ENCODE measurements at regions of chr10 and their contacts with region 1.

Region 1: DNA sequence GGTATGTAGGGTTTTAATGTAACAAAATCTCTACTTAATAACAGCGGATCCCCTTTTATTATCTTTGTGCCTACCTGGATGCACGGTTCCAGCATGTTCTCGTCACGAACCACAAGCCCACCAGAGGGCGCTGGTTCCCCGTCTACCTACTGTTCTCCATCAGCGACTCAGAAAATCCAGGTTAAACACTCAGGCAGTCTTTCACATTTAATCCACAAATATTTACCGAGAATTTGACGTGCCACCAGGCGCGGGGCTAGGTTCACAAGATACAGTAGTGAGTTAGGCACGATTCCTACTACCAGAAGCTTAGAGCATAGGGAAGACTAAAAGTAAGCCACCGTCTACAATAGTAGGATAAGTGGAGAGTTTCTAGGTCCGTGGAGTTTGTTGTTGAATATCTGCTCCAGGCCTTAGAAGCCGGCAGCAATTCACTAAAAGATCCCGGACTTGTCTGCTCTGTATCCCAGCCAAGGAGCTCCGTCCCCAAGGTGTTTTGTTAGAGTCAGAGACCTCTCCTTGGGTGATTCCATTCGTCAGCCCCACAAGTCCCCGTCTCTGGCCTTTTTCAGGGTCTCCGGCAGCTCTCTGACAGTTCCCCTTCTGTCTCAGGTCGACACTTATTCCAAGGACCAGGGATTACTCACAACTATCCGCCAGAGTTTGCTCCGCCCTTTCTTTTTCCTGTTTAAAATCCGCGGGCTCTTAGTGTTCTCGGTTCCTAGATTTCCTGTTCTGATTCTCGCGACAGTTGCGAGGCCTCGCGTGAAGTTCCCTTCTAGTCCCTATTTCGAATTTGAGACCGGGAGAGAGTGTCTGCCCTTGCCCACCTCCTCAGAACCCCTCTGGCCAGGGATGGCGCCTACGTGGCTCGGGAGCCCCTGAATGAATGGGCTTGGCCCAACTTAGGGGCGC is 1.5 kb upstream of the KAZALD1 start:
- DNase-seq: peak; percentile 98
- H3K4me3 Mint-ChIP-seq: peak overlapping the region; percentile 95
- H3K27ac Mint-ChIP-seq: peak overlapping the region; percentile 97
- H3K4me1 Mint-ChIP-seq: peaks cover 20% of the 10 kb centered on the region
- H3K27me3 Mint-ChIP-seq: no peaks in the 10 kb centered on the region
- CTCF ChIP-seq: peak; percentile 84

Region 2: DNA sequence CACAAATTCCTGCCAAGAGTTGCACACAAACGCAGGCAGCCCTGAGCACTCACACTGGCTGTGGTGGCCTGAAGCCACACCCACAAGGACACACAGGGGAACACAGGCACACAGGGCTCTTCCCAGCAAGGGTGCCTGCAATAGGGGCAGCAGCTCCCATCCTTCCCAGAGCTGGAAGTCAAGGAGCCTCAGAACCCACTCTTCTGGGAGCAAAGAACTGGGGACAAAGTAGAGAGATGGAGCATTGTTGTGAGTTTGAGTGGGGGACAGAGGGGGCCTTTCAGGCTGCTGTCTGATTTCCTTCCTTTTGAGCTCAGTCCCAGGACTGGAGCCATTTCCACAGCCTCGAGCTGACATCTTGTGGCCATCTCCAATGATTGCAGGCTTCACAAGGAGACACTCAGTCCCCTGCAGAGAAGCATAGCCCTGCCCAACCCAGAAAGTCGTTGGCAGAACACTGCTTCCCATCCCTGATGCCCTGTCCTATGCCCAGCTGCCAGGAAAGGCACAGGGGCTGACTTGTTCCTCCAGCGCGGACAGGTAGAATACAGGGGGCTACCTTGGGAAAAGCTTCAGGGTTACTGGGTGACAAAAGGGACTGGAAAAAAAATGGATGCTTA is 181.9 kb before region 1 on chr10:
- CTCF ChIA-PET with region 1: no interaction called
- POLR2A ChIA-PET with region 1: no interaction called
- intact Hi-C with region 1: no loop called
- DNase-seq: peak; percentile 78
- H3K4me3 Mint-ChIP-seq: no peak overlapping the region
- H3K27ac Mint-ChIP-seq: no peak overlapping the region
- H3K4me1 Mint-ChIP-seq: peaks cover 7% of the 10 kb centered on the region
- H3K27me3 Mint-ChIP-seq: no peaks in the 10 kb centered on the region
- CTCF ChIP-seq: peak; percentile 73

Region 3: GRCh38 chr10:101042667-101043355 is 17.5 kb before region 1 on chr10:
- CTCF ChIA-PET with region 1: interaction called, 234 read pairs
- POLR2A ChIA-PET with region 1: interaction called, 71 read pairs
- intact Hi-C with region 1: no loop called
- DNase-seq: peak; percentile 98
- H3K4me3 Mint-ChIP-seq: peak overlapping the region; percentile 98
- H3K27ac Mint-ChIP-seq: peak overlapping the region; percentile 100
- H3K4me1 Mint-ChIP-seq: peaks cover 29% of the 10 kb centered on the region
- H3K27me3 Mint-ChIP-seq: no peaks in the 10 kb centered on the region
- CTCF ChIP-seq: no peak

Region 4: DNA sequence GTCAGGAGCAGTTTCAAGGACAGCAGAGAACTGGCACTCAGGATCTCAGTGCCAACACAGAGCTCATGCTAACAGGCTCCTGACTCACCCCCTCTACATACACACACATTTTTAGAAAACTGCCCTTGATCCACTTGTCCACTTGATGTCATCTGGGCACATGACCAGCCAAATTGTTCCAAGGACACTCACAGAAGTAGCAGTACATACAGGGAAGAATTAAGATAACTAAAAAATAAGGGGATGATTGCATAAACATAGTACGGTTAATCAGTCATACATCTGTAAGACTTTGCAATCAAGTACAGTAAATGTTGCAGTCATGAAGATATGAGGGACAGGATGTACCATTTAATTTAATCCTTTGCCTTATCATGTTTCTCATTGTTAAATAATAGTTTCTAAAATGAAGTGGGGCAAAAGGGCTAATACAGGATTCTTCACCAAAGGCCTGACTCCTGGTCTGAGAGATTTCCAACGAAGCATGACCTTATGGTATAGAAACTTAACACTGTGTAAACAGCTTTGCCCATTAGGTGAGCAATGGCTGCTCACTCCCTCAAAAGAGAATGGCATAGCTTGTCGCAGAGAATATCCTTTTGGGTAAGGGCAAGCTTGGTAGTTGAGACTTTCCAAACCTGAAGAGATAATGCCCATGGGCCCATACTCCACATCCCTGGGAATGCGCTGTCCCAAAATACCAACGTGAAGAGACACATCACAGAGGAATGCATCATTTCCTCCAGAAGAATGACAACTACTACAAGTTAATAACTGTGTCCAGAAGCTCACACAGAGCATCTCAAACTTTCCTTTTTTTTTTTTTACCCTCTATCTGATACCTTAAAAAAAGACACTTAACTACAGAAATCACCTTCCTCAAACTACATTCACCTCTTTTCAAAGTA is 901.6 kb after region 1 on chr10:
- CTCF ChIA-PET with region 1: no interaction called
- POLR2A ChIA-PET with region 1: no interaction called
- intact Hi-C with region 1: no loop called
- DNase-seq: peak; percentile 18
- H3K4me3 Mint-ChIP-seq: no peak overlapping the region
- H3K27ac Mint-ChIP-seq: no peak overlapping the region
- H3K4me1 Mint-ChIP-seq: no peaks in the 10 kb centered on the region
- H3K27me3 Mint-ChIP-seq: no peaks in the 10 kb centered on the region
- CTCF ChIP-seq: no peak